Breast epithelium (tissue), 4 donors: ENCODE measurements at regions of chr5 and their contacts with region 1.

Region 1: DNA sequence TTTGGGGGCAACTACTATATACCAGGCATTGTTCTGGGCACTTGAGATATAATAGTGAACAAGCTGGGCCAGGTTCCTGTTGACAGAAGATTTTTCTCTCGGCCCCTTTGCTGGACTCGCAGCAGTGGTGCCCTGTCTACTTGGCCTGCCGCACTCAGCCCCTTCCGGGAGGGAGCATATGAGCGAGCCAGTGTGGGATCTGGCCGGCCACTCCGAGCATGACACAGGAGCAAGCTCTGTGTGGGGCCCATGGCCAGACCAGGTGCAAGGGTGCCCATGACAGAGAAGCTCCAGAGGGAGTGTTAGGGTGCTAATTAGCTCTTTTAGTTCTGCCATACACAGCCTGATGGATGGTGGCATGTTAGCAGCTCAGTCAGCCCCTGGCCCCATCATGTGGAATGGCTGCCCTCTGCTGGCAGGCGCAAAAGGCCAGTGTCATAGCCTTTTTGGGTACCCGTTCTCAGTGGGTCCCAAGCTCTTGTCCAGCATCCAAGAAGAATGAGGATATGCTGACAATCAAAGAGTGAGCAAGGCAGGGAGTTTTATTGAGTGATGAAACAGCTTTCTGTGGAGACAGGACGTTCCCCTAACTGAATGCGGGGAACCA is 9.3 kb upstream of the KIF4B start:
- DNase-seq: no peak
- H3K4me3 ChIP-seq: no peak overlapping the region
- H3K27ac ChIP-seq: no peak overlapping the region
- H3K4me1 ChIP-seq: no peaks in the 10 kb centered on the region
- H3K27me3 ChIP-seq: no peaks in the 10 kb centered on the region
- CTCF ChIP-seq: no peak
- POLR2A ChIP-seq: no peak

Region 2: DNA sequence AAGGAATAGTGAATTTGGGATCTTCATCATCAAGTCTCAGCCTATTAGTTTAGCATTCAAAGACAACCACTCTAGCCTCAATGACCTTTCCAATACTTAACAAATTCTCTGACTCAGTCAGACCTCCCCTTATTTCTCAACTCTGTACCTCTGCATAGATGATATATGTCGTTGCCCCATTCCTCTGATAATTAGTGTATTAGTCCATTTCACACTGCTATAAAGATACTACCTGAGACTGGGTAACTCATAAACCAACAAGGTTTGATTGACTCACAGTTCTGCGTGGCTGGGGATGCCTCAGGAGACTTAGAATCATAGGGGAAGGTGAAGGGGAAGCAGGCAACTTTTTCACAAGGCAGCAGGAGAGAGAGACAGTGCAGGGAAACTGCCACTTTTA is 54.5 kb before region 1 on chr5:
- intact Hi-C with region 1: loop called (anchors 2 kb)
- DNase-seq: no peak
- H3K4me3 ChIP-seq: no peak overlapping the region
- H3K27ac ChIP-seq: no peak overlapping the region
- H3K4me1 ChIP-seq: no peaks in the 10 kb centered on the region
- H3K27me3 ChIP-seq: no peaks in the 10 kb centered on the region
- CTCF ChIP-seq: no peak
- POLR2A ChIP-seq: no peak

Region 3: GRCh38 chr5:154984946-154985516 is 19.2 kb before region 1 on chr5:
- intact Hi-C with region 1: loop called (anchors 1 kb)
- DNase-seq: no peak
- H3K4me3 ChIP-seq: no peak overlapping the region
- H3K27ac ChIP-seq: no peak overlapping the region
- H3K4me1 ChIP-seq: no peaks in the 10 kb centered on the region
- H3K27me3 ChIP-seq: no peaks in the 10 kb centered on the region
- CTCF ChIP-seq: no peak
- POLR2A ChIP-seq: no peak

Region 4: GRCh38 chr5:155027993-155028629 is 23.9 kb after region 1 on chr5:
- intact Hi-C with region 1: no loop called
- DNase-seq: no peak
- H3K4me3 ChIP-seq: no peak overlapping the region
- H3K27ac ChIP-seq: no peak overlapping the region
- H3K4me1 ChIP-seq: no peaks in the 10 kb centered on the region
- H3K27me3 ChIP-seq: no peaks in the 10 kb centered on the region
- CTCF ChIP-seq: no peak
- POLR2A ChIP-seq: no peak